Panc1 (cell line): ENCODE measurements at regions of chr2 and their contacts with region 1.

Region 1: DNA sequence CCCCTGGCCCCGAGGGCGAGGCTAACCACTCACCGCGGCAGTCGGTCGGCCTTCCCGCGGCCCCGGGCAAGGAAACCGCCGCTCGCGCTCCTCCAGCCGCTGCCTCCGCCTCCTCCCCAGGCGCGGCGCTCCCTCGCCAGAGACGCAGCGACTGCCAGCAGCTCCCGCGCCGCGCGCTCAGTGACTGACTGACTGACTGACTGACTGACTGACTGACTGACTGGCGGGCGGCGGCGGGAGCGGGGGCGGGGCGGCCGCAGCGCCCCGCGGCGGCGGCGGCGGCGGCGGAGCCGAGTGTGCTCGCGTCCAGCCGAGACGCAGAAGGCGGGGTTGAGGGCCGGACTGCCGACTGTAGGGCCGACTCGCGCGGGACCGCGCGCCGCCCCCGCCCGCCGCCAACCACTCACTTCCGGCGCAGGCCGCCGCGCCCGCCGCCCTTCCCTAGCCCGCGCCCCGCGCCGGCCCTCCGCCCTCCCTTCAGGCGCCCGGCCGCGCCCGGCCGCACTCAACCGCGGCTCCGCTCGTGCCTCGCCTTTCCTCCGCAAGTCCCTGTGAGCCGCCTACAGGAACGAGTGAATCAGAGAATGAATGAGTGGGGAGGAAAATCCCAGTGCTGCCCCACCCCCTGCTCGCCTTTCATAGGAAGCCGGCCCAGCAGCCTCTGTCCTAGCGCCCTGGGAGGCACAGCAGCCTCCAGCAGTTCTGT is at the start of gene RAPH1:
- DNase-seq: peak; percentile 38
- ATAC-seq: peak; percentile 98
- H3K4me3 ChIP-seq: peak within 1 kb of the TSS; percentile 83 to 85
- H3K27ac ChIP-seq: peak within 1 kb of the TSS; percentile 92
- H3K4me1 ChIP-seq: peaks cover 18% of the 10 kb centered on the region
- H3K27me3 ChIP-seq: no peaks in the 10 kb centered on the region
- CTCF ChIP-seq: no peak; the same call in 1 of the 2 replicates
- total RNA-seq, gene RAPH1: 31.4 TPM

Region 2: GRCh38 chr2:203510256-203510940 is 24.8 kb before region 1 on chr2:
- CTCF ChIA-PET with region 1: no interaction called
- POLR2A ChIA-PET with region 1: interaction called, 13 read pairs
- in situ Hi-C with region 1: no loop called
- intact Hi-C with region 1: no loop called
- DNase-seq: no peak
- ATAC-seq: no peak
- H3K4me3 ChIP-seq: no peak overlapping the region
- H3K27ac ChIP-seq: no peak overlapping the region
- H3K4me1 ChIP-seq: no peaks in the 10 kb centered on the region
- H3K27me3 ChIP-seq: no peaks in the 10 kb centered on the region
- CTCF ChIP-seq: no peak